ENCODE measurements at regions of chr12 and their contacts with region 1.

Region 1: DNA sequence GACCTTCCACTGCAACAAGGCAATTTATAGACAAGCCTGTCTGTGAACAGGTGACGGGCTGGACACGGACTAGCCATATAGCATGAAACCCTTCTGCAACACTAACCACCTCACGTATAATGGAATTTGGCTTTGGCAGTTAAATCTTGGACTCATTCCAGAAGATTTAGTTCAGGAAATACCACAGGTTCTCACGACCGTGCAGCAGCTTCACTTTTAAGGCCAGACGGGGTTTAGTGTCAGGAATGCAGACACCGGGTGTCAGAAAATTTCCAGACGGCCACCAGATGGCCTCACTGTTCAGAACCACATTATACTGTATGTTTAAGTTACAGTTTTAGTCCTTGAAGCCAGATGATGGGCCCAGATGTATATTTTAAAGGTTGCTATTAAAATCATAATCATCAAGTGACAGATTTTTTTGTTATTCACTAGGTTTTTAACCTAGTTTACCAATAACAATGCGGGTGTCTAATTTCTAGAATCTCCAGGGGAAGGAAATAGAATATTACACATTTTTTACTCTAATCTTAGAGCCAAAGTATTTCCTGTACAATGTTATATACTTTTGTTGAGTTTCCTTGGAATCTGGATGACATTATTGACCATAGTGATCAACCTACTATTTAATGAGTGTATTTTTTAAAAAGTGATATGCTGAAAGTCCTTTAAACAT is 90.5 kb upstream of the TMPO start:
- DNase-seq: peak; percentile 18
- H3K4me3 Mint-ChIP-seq: no peak overlapping the region
- H3K27ac Mint-ChIP-seq: no peak overlapping the region
- H3K4me1 Mint-ChIP-seq: peaks cover 6% of the 10 kb centered on the region
- H3K27me3 Mint-ChIP-seq: peaks cover 7% of the 10 kb centered on the region

Region 2: GRCh38 chr12:98274430-98275130 is 150.3 kb before region 1 on chr12:
- intact Hi-C with region 1: no loop called
- DNase-seq: no peak
- H3K4me3 Mint-ChIP-seq: no peak overlapping the region
- H3K27ac Mint-ChIP-seq: no peak overlapping the region
- H3K4me1 Mint-ChIP-seq: no peaks in the 10 kb centered on the region
- H3K27me3 Mint-ChIP-seq: peaks cover 7% of the 10 kb centered on the region

Region 3: GRCh38 chr12:98532681-98533304 is 107.9 kb after region 1 on chr12:
- intact Hi-C with region 1: loop called (anchors 1 kb)
- DNase-seq: no peak
- H3K4me3 Mint-ChIP-seq: no peak overlapping the region
- H3K27ac Mint-ChIP-seq: no peak overlapping the region
- H3K4me1 Mint-ChIP-seq: peaks cover 18% of the 10 kb centered on the region
- H3K27me3 Mint-ChIP-seq: no peaks in the 10 kb centered on the region

Region 4: DNA sequence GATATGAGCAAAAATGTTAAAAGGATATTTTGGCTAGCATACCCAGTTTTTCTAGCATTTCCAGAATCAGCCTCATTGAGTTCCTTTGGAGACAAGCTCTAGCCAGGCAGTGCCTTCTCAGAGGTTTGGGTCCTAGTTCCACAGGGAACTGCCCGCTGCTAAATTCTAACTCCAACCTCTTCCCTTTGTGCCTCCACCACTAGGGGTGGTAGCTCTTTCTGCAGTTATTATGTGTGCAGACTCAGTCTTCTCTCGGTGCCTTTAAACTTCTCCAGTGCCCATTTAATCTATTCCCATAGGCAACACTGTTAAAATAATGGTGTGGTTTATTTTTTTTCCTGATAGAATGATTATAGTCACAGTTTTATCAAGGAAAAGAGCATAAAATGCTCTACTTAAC is 147.1 kb after region 1 on chr12:
- intact Hi-C with region 1: no loop called
- DNase-seq: no peak
- H3K4me3 Mint-ChIP-seq: no peak overlapping the region
- H3K27ac Mint-ChIP-seq: no peak overlapping the region
- H3K4me1 Mint-ChIP-seq: peaks cover 1% of the 10 kb centered on the region
- H3K27me3 Mint-ChIP-seq: peaks cover 2% of the 10 kb centered on the region

Region 5: GRCh38 chr12:98698603-98699463 is 274.0 kb after region 1 on chr12:
- intact Hi-C with region 1: no loop called
- DNase-seq: peak; percentile 26
- H3K4me3 Mint-ChIP-seq: no peak overlapping the region
- H3K27ac Mint-ChIP-seq: no peak overlapping the region
- H3K4me1 Mint-ChIP-seq: peaks cover 21% of the 10 kb centered on the region
- H3K27me3 Mint-ChIP-seq: no peaks in the 10 kb centered on the region